ENCODE measurements at regions of chr16 and their contacts with region 1.

Region 1: GRCh38 chr16:75244844-75245758 is 6.3 kb downstream of the BCAR1 start:
- DNase-seq: peak; percentile 87
- H3K4me3 Mint-ChIP-seq: peak overlapping the region; percentile 45
- H3K27ac Mint-ChIP-seq: peak overlapping the region; percentile 96
- H3K4me1 Mint-ChIP-seq: peaks cover 37% of the 10 kb centered on the region
- H3K27me3 Mint-ChIP-seq: no peaks in the 10 kb centered on the region
- CTCF ChIP-seq: no peak

Region 2: DNA sequence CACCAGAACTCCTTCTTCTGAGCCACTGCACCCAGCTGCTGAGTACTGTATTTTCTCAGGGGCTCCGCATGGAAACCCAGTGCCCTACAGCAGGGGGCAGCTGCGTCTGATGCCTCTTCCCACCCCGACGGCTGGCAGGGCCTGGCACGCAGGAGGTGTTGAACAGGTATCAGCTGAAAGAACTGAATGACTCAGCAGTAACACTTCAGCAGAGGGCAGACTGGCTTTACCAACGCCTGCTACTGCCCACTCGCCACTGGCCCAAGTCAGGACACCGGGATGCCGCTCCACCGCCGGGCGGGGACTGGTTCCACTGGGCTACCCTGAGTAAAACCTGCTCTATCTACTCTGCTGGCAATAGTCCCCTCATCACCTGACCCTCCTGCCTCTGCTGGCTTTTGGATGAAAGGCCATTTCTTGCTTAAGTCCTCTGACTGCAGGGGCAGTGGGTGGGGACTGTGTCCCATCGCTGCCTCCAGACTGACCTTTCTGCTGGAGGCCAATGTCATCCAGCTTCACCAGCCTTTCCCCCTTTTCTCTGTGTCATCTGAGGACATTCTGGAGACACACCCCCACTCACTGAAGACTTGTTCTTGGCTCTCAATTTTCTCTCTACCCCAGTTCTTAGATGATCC is 370.1 kb before region 1 on chr16:
- CTCF ChIA-PET with region 1: no interaction called
- POLR2A ChIA-PET with region 1: no interaction called
- intact Hi-C with region 1: no loop called
- DNase-seq: no peak
- H3K4me3 Mint-ChIP-seq: no peak overlapping the region
- H3K27ac Mint-ChIP-seq: no peak overlapping the region
- H3K4me1 Mint-ChIP-seq: peaks cover 6% of the 10 kb centered on the region
- H3K27me3 Mint-ChIP-seq: no peaks in the 10 kb centered on the region
- CTCF ChIP-seq: no peak

Region 3: GRCh38 chr16:75385507-75386152 is 140.5 kb after region 1 on chr16:
- CTCF ChIA-PET with region 1: interaction called, 4 read pairs
- POLR2A ChIA-PET with region 1: interaction called, 31 read pairs
- intact Hi-C with region 1: loop called (anchors 2 kb)
- DNase-seq: peak; percentile 85
- H3K4me3 Mint-ChIP-seq: no peak overlapping the region
- H3K27ac Mint-ChIP-seq: no peak overlapping the region
- H3K4me1 Mint-ChIP-seq: peaks cover 12% of the 10 kb centered on the region
- H3K27me3 Mint-ChIP-seq: no peaks in the 10 kb centered on the region
- CTCF ChIP-seq: peak; percentile 66

Measured in MCF 10A (cell line).